Right ventricle myocardium inferior (tissue), 1 donor: ENCODE measurements at regions of chr6 and their contacts with region 1.

Region 1: DNA sequence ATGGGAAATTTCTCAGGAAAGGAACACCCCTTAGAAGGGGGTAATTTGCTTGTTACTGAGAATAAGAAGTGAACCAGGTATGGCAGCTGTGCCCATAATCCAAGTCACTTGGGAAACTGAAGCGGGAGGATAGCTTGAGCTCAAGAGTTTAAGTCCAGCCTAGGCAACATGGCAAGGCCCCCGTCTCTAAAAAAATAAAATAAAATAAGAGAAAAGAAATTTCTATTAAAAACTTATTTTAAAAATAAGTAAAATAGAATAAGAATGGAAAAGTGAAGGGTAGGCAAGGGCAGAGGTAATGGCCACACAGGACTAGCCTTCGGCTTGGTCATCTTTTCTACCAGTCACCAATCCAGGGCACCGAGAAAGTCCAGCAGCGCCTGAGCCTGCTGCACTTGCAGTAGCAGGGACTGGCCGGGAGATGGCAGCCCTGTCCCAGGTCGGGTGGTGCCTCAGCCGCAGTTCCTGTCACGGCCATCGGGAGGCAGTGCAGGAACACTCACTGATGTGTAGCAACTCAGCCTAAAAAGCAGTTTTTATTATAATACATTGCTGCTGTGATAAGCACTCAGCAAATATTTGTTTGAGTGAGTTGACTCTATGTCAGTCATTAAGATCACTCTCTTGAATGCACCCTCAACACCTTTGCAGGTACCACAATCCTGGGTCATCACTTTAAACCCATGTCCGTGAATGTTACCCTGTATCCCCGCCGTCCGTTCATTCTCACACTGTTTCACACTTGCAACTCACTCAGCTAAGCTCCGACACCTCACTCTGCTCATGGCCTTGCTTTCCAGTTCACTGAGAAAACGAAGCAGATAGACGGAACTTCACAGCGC is 23.2 kb upstream of the GCM1 start:
- DNase-seq: peak; percentile 96
- ATAC-seq: peak; percentile 95

Region 2: DNA sequence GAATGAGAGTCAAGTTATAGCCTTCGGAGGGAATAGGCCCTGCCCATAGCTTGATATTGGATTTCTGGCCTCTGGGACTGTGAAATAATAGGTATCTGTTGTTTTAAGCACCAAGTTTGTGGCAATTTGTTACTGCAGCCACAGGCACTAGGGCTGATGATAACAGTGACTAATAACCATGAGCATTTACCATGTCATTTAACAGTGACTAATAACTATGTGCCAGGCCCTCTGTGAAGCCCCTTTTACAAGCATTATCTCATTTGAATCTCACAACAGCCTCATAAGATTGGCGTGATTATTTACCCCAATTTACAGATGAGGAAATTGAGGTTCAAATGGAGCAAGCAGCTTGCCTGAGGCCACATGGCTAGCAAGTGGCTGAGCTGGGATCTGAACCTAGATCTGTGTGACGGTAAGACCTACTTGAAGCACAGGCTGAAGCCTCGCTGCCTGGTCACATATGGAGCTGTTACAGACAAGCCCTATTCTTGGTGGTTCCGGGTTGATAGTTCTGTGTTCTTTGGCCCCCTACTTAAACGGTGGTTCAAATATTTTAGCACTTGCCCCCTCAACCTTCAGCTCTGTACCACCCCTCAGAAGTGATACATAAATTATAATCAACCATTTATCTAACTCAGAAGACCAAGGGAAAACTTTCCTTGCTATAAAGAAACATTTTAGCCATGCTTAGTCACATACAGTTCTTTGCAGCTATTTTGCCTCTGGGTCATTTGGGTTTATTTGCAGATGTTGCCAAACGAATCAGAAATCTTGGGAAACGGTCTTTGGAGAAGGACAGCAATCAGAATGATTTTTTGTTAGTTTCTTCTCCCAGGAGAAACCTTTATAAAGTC is 78.6 kb after region 1 on chr6:
- intact Hi-C with region 1: loop called (anchors 5 kb)
- DNase-seq: no peak
- ATAC-seq: no peak

Region 3: DNA sequence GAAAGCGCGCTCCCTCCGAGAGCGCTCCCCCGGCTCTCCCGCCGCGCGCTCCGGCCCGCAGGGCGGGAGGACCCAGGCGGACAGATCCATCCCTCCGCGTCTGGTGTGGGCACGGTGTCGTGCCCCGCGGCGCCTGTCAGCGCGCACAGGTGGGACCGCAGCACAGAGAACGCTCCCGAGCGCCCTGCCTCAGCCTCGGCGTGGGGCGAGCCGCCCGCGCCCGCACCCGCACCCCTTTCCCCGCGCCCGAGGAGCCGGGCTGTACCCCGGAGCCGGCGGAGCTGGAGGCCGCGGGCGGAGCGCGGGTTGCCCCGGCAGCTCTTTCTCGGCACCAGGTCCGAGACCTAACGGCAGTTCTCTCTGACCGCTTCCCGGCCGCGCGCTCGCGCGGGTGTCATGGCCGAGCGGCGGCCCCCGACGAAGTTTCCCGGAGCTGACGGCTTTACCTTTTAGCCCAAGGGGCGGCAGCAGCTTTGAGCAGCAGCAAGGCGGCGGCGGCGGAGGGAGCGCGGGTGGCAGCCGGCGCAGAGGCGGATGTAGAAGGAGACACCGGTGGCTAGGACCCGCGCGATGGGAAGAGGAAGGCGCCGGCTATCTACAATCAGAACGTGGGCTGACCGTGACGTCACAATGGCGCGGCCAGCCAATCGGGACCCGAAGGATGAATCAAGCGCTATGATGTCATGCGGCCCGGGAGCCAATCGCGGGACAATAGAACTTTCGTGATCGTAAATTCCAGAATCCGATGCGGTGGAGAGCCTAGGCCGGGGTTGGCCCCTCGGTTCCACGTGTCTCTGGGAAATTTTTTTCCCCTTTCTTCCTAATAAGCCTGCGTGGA is 176.8 kb after region 1 on chr6 and contains the start of gene ELOVL5:
- intact Hi-C with region 1: loop called (anchors 5 kb)
- DNase-seq: peak; percentile 100
- ATAC-seq: peak; percentile 94
- total RNA-seq, gene ELOVL5: 28.0 TPM

Region 4: DNA sequence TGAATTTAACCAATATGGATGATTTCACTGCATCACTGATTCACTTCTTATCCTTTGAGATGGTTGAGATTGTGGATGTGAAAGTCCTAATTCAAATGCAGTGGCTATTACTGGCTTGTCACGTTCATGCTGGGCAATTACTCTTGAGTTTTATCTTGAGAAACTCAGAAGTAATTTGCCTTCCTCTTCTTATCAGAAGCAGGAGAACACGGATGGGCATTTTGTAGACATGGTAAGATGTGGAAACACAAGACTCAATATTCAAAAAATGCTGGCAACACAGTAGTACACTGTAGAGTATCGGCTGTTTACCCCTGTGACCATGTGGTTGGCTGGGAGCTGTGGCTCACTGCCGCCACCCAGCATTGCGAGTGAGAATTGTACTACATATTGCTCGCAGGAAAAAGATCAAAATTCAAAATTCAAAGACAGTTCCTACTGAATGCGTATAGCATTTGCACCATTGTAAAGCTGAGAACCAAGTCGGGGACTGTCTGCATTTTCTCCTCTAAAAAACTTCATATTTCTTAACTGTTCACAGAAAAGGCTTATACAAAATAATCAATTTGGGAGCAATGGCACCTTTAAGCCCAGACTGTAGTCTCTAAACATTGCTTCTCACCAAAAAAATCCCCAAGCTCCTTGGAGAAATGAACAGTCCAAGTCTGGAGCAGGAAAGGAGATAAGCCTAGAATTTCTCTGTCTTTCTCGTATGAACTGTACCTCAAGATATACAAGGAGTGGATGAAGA is 238.9 kb after region 1 on chr6:
- intact Hi-C with region 1: loop called (anchors 1 kb)
- DNase-seq: no peak
- ATAC-seq: peak; percentile 84

Region 5: DNA sequence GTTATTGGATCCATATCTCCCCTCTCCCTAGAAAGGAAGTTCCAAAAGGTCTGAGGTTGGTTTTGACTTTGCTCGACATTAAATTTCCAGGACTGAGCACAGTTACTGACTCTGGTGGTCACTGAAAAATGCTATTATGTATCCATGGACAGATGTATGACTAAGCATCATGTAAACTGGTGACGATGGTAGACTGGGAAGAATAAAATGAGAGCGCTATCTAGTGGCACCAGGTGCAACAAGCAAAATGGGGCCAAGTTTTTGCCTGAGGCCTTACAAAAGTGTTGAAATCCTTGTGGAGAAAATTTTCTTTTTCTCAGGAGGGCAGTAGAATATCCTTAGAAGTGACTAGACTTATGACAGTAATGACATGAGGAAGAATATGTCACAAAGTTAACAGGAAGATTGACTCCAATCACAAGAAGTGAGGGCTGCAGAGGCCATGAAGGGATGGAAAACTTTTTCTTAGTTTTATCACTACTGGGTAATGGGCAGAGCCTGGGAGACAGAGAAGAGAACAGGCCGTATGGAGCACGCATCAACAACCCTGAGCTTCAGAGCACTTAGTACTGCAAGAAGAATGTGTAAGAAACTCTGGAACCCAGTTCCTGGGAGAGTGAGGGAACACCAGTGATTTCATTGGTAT is 265.9 kb after region 1 on chr6:
- intact Hi-C with region 1: loop called (anchors 2 kb)
- DNase-seq: no peak
- ATAC-seq: no peak

Region 6: GRCh38 chr6:53484476-53485280 is 312.9 kb after region 1 on chr6:
- intact Hi-C with region 1: loop called (anchors 1 kb)
- DNase-seq: no peak
- ATAC-seq: peak; percentile 59

Region 7: GRCh38 chr6:53725791-53726431 is 554.1 kb after region 1 on chr6:
- intact Hi-C with region 1: loop called (anchors 10 kb)
- DNase-seq: peak; percentile 88
- ATAC-seq: peak; percentile 82